ENCODE measurements at regions of chr11 and their contacts with region 1.

Region 1: DNA sequence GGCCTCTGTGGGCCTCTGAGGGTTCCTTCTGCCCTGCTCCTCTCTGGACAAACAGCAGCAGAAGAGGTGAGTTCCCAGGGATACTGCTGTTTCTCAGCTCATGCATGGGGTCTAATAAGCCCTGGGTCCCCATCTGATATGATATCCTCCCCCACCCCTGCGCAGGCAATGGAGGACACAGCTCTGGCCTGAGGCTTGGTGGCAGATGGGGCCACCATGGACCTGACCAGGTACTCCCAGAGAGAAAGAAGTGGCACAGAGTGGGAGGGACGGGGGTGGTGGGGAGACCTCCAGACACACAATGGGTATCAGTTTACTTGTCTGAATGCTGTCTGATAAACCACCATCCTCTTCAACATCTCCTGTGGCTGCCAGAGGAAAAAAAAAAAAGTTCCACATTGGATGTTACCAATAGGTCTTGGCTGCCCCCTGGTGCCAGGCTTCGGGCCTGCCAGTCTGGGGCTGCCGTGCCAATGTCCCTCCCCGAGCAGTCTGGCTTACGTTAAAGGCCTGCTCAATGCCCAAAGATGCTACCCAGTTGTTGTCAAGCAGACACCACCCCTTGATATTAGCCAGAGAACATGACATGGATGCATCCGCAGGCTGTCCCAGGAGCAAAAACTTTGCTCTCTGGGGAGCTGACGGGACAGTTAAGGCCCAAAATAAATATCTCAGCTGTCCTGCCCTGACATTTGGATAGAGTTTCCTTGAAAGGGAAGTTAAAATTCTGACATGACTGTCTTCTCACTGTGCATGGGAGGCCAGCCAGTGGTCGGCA is 27.9 kb upstream of the ABCC8 start:
- DNase-seq: peak; percentile 69 to 89
- ATAC-seq: peak; percentile 71

Region 2: GRCh38 chr11:17221968-17222367 is 282.6 kb before region 1 on chr11:
- intact Hi-C with region 1: loop called in 1 of 2 experiments (anchors 10 kb)
- DNase-seq: no peak
- ATAC-seq: no peak

Region 3: GRCh38 chr11:17384002-17384511 is 120.5 kb before region 1 on chr11:
- intact Hi-C with region 1: loop called (anchors 2 to 5 kb)
- DNase-seq: peak; percentile 62 to 82
- ATAC-seq: peak; percentile 61